GM12878 (cell line): ENCODE measurements at regions of chr10 and their contacts with region 1.

Region 1: GRCh38 chr10:118106426-118106825 is 59.7 kb upstream of the RAB11FIP2 start:
- DNase-seq: no peak
- ATAC-seq: peak; percentile 70
- H3K4me3 ChIP-seq: no peak overlapping the region
- H3K27ac ChIP-seq: no peak overlapping the region
- H3K4me1 ChIP-seq: no peaks in the 10 kb centered on the region
- H3K27me3 ChIP-seq: no peaks in the 10 kb centered on the region; a peak in 1 of 4 replicates
- CTCF ChIP-seq: peak; percentile 39 to 59 (median 53); a peak in 5 of 6 replicates
- EP300 ChIP-seq: no peak
- POLR2A ChIP-seq: no peak
- RAD21 ChIP-seq: peak; percentile 66

Region 2: GRCh38 chr10:117860823-117861222 is 245.6 kb before region 1 on chr10:
- CTCF ChIA-PET with region 1: interaction called, 8 read pairs
- POLR2A ChIA-PET with region 1: no interaction called
- RAD21 ChIA-PET with region 1: no interaction called
- SMC1A ChIA-PET with region 1: interaction called, 3 read pairs
- in situ Hi-C with region 1: no loop called
- intact Hi-C with region 1: loop called (anchors 10 kb)
- DNase-seq: no peak
- ATAC-seq: peak; percentile 68
- H3K4me3 ChIP-seq: no peak overlapping the region
- H3K27ac ChIP-seq: no peak overlapping the region
- H3K4me1 ChIP-seq: no peaks in the 10 kb centered on the region
- H3K27me3 ChIP-seq: no peaks in the 10 kb centered on the region
- CTCF ChIP-seq: peak; percentile 27 to 59 (median 44); a peak in 4 of 6 replicates
- EP300 ChIP-seq: no peak
- POLR2A ChIP-seq: no peak
- RAD21 ChIP-seq: peak; percentile 39

Region 3: DNA sequence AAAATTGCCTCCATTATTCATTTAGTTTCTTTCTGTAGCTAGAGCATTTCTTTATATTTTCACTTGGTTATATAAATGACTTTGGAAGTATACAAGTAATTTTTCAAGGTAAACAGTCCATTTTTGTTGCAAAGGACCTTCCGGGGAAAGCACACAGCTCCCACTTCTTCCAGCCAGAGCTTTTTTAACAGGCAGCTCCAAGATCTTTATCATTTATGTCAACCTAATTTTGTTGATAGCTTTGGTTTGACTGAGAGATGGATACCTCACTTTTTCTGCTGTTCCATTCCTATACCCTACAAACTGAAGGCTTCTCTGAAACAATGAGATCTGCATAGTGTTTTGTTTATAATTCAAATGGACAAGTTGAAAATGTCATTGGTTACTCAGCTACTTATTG is 10.4 kb before region 1 on chr10:
- CTCF ChIA-PET with region 1: interaction called, 10 read pairs
- POLR2A ChIA-PET with region 1: no interaction called
- RAD21 ChIA-PET with region 1: no interaction called
- SMC1A ChIA-PET with region 1: no interaction called
- in situ Hi-C with region 1: no loop called
- intact Hi-C with region 1: no loop called
- DNase-seq: no peak
- ATAC-seq: no peak
- H3K4me3 ChIP-seq: no peak overlapping the region
- H3K27ac ChIP-seq: no peak overlapping the region
- H3K4me1 ChIP-seq: no peaks in the 10 kb centered on the region
- H3K27me3 ChIP-seq: no peaks in the 10 kb centered on the region; a peak in 1 of 4 replicates
- CTCF ChIP-seq: no peak
- EP300 ChIP-seq: no peak
- POLR2A ChIP-seq: no peak
- RAD21 ChIP-seq: no peak

Region 4: DNA sequence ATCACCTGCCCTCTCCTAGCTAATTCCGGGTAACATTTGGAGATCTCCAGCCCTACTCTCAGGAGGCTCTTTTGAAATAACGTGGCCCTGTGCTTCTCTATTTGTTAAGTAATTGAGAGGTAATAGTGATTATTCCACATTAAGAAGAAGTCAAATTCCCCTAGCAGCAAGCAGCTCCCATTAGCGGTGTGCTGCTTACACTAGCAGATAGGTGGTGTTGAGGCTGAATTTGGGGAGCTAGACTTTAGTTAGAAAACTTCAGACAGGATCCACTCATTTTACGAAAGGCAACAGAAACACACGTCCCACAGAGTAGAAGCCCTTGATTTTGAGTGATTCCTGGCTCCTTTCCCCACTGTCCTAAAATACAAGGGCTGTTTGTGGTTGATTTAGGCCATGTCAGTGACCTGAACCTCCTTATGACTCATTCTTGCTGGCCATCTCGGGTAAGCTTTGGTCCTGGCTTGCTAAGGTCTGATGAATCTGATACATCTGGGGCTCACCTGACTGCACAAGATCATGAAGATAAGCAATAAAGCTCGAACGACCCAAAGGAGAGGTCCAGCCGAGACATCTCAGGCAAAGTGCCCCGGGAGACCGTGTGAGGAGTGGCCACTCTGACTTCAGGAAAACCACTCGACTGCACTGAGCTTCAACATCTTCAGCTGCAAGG is 158.5 kb after region 1 on chr10:
- CTCF ChIA-PET with region 1: no interaction called
- POLR2A ChIA-PET with region 1: no interaction called
- RAD21 ChIA-PET with region 1: no interaction called
- SMC1A ChIA-PET with region 1: no interaction called
- in situ Hi-C with region 1: no loop called
- intact Hi-C with region 1: no loop called
- DNase-seq: no peak
- ATAC-seq: no peak
- H3K4me3 ChIP-seq: no peak overlapping the region
- H3K27ac ChIP-seq: no peak overlapping the region
- H3K4me1 ChIP-seq: no peaks in the 10 kb centered on the region
- H3K27me3 ChIP-seq: no peaks in the 10 kb centered on the region; a peak in 1 of 4 replicates
- CTCF ChIP-seq: no peak
- EP300 ChIP-seq: no peak
- POLR2A ChIP-seq: no peak
- RAD21 ChIP-seq: no peak